Activated naive CD4-positive, alpha-beta T cell treated with anti-CD3 and anti-CD28 coated beads for 36 hours (primary cell): ENCODE measurements at regions of chr4 and their contacts with region 1.

Region 1: GRCh38 chr4:185039508-185040273 is 21.4 kb downstream of the HELT start:
- DNase-seq: peak; percentile 71
- H3K4me3 Mint-ChIP-seq: peak overlapping the region; percentile 67
- H3K27ac Mint-ChIP-seq: peak overlapping the region; percentile 63
- H3K4me1 Mint-ChIP-seq: peaks cover 2% of the 10 kb centered on the region
- H3K27me3 Mint-ChIP-seq: no peaks in the 10 kb centered on the region

Region 2: DNA sequence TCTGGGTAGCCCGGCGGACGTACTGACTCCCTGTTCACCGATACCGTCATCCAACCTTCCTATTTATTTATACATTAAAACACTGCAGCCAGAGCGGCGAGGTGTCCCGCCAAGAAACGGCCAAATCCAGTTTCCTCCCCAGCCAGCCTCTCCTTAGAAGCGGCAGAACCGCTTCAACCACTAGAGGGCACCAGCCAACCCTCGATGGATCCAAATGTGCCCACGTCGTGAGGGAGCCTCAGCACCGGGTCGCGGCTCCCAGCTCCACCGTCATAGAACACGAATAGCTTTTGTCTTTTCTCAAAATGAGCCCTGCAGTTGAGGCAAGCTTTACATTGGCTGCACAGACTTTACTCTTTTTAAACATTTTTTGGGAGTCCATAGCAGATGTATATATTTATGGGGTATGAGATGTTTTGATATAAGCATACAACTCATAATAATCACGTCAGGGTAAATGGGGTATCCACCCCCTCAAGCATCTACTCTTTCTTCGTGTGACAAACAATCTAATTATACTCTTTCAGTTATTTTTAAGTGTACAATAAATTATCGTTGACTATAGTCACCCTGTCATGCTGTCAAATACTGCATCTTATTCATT is 34.4 kb before region 1 on chr4:
- CTCF ChIA-PET with region 1: no interaction called
- intact Hi-C with region 1: loop called (anchors 1 kb)
- DNase-seq: peak; percentile 92
- H3K4me3 Mint-ChIP-seq: peak overlapping the region; percentile 17
- H3K27ac Mint-ChIP-seq: no peak overlapping the region
- H3K4me1 Mint-ChIP-seq: peaks cover 6% of the 10 kb centered on the region
- H3K27me3 Mint-ChIP-seq: peaks cover 28% of the 10 kb centered on the region

Region 3: GRCh38 chr4:185082561-185082960 is 42.9 kb after region 1 on chr4:
- CTCF ChIA-PET with region 1: interaction called, 21 read pairs
- intact Hi-C with region 1: no loop called
- DNase-seq: no peak
- H3K4me3 Mint-ChIP-seq: no peak overlapping the region
- H3K27ac Mint-ChIP-seq: no peak overlapping the region
- H3K4me1 Mint-ChIP-seq: no peaks in the 10 kb centered on the region
- H3K27me3 Mint-ChIP-seq: peaks cover 7% of the 10 kb centered on the region

Region 4: GRCh38 chr4:185096032-185096653 is 56.5 kb after region 1 on chr4:
- CTCF ChIA-PET with region 1: interaction called, 86 read pairs
- intact Hi-C with region 1: loop called (anchors 1 kb)
- DNase-seq: peak; percentile 57
- H3K4me3 Mint-ChIP-seq: no peak overlapping the region
- H3K27ac Mint-ChIP-seq: no peak overlapping the region
- H3K4me1 Mint-ChIP-seq: no peaks in the 10 kb centered on the region
- H3K27me3 Mint-ChIP-seq: peaks cover 8% of the 10 kb centered on the region

Region 5: DNA sequence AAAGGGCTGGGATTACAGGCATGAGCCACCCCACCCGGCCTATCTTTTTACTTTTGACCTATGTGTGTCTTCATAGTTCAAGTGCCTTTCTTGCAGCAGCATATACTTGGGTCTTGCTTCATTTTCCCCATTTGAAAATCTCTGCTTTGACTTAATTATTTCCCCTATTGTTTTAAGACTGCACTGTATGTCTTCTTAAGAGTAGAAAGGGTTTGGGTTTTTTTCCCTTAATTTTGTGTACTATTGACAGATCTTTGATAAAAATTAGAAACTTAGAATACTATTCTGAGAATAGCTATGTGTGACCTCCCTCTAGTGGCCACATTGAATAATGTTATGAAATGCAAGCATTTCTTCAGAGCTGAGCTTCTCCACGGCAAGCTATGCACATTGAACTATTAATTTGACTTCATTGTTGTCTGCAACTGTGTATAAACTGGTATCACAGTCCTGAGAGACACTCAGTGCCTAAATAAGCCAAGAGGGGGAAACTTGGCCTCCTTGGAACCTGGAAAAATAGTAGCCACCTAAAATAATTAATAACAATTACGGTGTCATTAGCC is 94.7 kb after region 1 on chr4:
- CTCF ChIA-PET with region 1: interaction called, 24 read pairs
- intact Hi-C with region 1: loop called (anchors 1 kb)
- DNase-seq: no peak
- H3K4me3 Mint-ChIP-seq: no peak overlapping the region
- H3K27ac Mint-ChIP-seq: no peak overlapping the region
- H3K4me1 Mint-ChIP-seq: no peaks in the 10 kb centered on the region
- H3K27me3 Mint-ChIP-seq: peaks cover 21% of the 10 kb centered on the region

Region 6: GRCh38 chr4:185219551-185220344 is 180.1 kb after region 1 on chr4:
- CTCF ChIA-PET with region 1: no interaction called
- intact Hi-C with region 1: no loop called
- DNase-seq: no peak
- H3K4me3 Mint-ChIP-seq: no peak overlapping the region
- H3K27ac Mint-ChIP-seq: no peak overlapping the region
- H3K4me1 Mint-ChIP-seq: peaks cover 26% of the 10 kb centered on the region
- H3K27me3 Mint-ChIP-seq: no peaks in the 10 kb centered on the region

Region 7: DNA sequence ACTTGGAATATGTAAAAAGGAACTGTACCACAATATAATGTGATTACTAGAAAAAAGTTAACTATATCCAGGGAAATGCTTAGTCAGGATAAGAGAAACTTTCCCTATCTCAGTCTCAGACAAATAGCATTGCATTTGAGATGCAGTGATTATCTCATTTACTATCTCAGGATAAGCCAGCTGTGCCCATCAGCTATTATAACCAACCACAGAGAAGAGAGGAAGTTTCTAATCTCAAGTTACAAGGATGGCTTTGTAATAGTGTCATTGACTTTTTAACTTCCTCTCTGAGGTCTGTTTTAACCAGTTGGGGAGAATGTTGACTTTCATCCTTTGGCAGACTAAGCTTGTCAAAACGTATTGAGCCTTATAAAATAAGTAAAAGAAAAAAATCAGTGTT is 226.3 kb after region 1 on chr4:
- CTCF ChIA-PET with region 1: no interaction called
- intact Hi-C with region 1: no loop called
- DNase-seq: no peak
- H3K4me3 Mint-ChIP-seq: no peak overlapping the region
- H3K27ac Mint-ChIP-seq: no peak overlapping the region
- H3K4me1 Mint-ChIP-seq: peaks cover 25% of the 10 kb centered on the region
- H3K27me3 Mint-ChIP-seq: no peaks in the 10 kb centered on the region

Region 8: DNA sequence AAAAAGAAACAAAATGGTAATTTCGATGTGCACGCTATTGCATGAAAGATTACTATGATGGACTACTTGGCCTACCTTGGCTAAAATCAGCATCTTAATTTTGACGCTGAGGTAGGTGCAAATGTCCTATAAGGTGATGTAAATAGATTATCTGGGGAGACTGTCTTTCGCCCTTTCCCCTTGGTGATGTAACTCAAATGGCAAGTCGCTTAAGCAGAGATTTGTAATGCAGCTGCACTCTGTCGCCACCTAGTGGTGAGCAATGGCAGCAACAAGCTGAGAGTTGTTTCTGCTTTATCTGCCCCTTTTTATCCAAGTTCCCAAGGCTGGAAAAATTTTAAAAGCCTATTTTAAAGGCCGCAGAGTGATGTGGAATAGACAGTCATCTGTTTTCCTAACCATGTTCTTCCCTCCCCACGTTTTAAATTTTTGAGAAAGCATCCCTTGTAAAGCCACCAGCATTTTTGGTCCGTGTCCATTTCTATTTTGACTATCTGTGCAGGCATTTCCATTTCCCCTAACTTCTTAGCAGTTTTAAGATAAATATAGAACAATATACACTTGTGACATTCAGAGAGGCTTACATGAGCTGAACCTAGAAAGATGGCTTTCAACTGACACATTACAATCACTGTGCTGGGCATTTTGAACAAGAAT is 558.0 kb after region 1 on chr4:
- CTCF ChIA-PET with region 1: no interaction called
- intact Hi-C with region 1: loop called (anchors 2 kb)
- DNase-seq: peak; percentile 84
- H3K4me3 Mint-ChIP-seq: no peak overlapping the region
- H3K27ac Mint-ChIP-seq: no peak overlapping the region
- H3K4me1 Mint-ChIP-seq: no peaks in the 10 kb centered on the region
- H3K27me3 Mint-ChIP-seq: peaks cover 13% of the 10 kb centered on the region